MCF 10A (cell line): ENCODE measurements at regions of chr14 and their contacts with region 1.

Region 1: GRCh38 chr14:33792720-33793368 is 158.0 kb downstream of the EGLN3 start:
- DNase-seq: peak; percentile 64
- H3K4me3 Mint-ChIP-seq: peak overlapping the region; percentile 17
- H3K27ac Mint-ChIP-seq: no peak overlapping the region
- H3K4me1 Mint-ChIP-seq: no peaks in the 10 kb centered on the region
- H3K27me3 Mint-ChIP-seq: no peaks in the 10 kb centered on the region
- CTCF ChIP-seq: peak; percentile 93

Region 2: GRCh38 chr14:32576088-32576795 is 1216.6 kb before region 1 on chr14:
- CTCF ChIA-PET with region 1: interaction called, 8 read pairs
- POLR2A ChIA-PET with region 1: no interaction called
- intact Hi-C with region 1: loop called (anchors 1 kb)
- DNase-seq: peak; percentile 73
- H3K4me3 Mint-ChIP-seq: no peak overlapping the region
- H3K27ac Mint-ChIP-seq: no peak overlapping the region
- H3K4me1 Mint-ChIP-seq: no peaks in the 10 kb centered on the region
- H3K27me3 Mint-ChIP-seq: peaks cover 13% of the 10 kb centered on the region
- CTCF ChIP-seq: peak; percentile 97

Region 3: DNA sequence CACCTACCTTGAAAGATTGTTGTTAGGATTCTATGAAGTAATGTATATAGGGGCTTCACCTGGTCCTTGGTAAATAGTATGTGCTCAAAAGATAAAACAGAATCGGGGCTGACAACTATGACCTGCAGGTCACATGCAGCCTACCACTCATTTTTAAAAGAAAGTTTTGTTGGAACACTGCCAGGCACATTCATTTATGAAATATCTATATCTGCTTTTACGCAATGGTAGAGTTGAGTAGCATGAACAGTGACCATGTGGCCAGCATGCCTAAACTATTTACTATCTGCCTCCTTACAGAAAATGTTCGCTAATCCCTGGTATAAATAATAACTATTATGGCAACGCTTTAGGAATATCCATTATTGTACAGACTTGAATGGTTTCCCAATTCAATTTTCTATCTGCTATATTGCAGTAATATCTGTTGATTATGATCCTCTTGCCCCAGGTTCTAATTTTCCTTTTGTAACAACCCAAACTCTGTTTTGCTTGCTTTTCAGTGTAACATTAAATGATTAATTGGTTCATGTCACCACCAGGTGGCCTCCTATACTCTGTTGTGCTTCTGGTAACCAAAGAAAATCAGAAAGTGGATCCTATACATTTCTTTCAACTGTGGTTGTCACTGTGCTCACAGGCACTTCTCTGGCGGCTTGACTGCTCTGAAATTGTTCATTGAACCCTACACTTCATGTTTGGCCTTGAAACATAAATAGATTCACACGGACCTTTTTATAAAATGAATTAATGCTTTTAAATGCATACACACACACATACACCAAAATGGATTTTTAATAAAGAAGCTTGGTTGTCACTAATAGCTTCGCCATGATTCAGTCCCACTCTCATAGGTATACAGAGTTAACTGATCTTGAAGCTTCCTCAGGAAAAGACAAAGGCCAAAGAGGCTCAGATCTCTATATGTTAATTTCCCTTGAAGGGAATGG is 1081.8 kb before region 1 on chr14:
- CTCF ChIA-PET with region 1: interaction called, 5 read pairs
- POLR2A ChIA-PET with region 1: no interaction called
- intact Hi-C with region 1: loop called (anchors 1 kb)
- DNase-seq: peak; percentile 56
- H3K4me3 Mint-ChIP-seq: no peak overlapping the region
- H3K27ac Mint-ChIP-seq: no peak overlapping the region
- H3K4me1 Mint-ChIP-seq: peaks cover 6% of the 10 kb centered on the region
- H3K27me3 Mint-ChIP-seq: no peaks in the 10 kb centered on the region
- CTCF ChIP-seq: peak; percentile 56

Region 4: DNA sequence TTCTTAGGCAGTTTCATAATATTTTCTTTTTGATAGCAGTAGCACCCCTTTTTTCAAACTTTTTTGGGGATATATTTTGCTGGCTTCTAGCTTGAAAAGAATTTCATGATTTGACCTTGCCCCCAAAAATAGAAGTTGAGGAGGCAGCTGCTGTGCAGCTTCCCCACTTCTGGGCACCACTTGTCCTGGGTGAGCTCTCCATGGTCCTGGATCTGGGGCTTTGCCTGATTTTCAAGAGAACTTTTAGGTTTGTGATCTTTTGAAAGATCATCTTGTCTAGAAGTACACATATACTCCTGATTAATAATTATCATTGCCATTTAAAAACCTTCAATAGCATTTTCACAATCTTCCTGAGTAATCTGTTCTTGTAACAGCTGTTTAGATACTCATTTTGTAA is 582.5 kb before region 1 on chr14:
- CTCF ChIA-PET with region 1: interaction called, 3 read pairs
- POLR2A ChIA-PET with region 1: no interaction called
- intact Hi-C with region 1: loop called (anchors 10 kb)
- DNase-seq: peak; percentile 38
- H3K4me3 Mint-ChIP-seq: no peak overlapping the region
- H3K27ac Mint-ChIP-seq: no peak overlapping the region
- H3K4me1 Mint-ChIP-seq: no peaks in the 10 kb centered on the region
- H3K27me3 Mint-ChIP-seq: peaks cover 29% of the 10 kb centered on the region
- CTCF ChIP-seq: no peak

Region 5: DNA sequence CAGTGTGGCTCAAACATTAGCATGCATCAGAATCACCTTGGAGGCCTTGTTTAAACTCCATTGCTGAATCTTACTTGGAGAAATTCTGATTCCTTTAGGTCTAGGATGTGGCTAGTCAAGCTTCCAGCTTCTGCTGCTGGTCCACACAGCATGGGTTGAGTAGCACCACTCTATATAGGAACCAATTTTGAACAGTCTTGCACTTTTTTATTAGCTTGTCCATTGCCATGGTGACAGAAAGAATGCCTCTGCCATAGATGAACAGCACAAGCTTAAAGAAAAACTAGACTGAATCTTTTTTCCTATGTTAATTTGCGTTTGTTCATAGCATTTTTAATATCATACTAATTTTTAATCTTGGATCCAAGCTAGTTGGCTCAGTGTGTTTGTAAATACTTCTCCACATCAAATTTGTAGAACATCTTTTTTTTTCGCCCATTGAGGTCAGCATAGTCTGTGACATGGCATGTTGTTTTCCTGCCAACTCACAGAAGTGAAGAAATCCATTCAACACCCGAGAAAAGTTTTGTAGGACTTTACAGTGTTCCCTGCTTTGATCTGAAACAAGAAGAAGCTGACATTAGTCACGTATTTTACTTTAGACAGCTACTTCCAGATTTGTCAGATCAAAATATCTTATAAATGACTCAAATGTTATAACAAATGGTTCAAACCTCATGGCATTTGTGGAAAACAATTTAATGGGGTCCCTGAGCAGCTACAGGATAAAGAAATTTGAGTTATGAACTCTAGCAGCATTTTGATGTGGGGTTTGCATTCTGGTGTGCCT is 280.8 kb before region 1 on chr14:
- CTCF ChIA-PET with region 1: interaction called, 6 read pairs
- POLR2A ChIA-PET with region 1: no interaction called
- intact Hi-C with region 1: loop called (anchors 1 kb)
- DNase-seq: peak; percentile 64
- H3K4me3 Mint-ChIP-seq: no peak overlapping the region
- H3K27ac Mint-ChIP-seq: no peak overlapping the region
- H3K4me1 Mint-ChIP-seq: peaks cover 8% of the 10 kb centered on the region
- H3K27me3 Mint-ChIP-seq: no peaks in the 10 kb centered on the region
- CTCF ChIP-seq: no peak

Region 6: DNA sequence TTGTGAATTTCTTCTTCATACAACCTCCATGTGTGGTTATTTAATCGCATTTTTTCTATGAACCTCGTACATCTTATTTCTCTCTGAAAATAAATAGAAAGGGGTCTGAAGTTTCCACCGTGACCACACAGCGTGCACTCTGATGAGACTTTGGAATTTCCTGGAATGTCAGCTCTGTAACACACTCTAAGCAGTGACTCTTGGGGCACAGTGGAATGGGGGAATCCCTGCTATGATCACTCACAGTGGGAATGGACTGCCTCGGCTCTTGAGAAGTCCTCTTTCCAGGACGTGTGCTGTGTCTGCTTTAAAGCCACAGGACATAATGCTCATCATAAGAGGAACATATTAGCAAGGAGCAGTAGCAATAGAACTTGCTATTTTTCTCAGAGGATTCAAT is 258.2 kb before region 1 on chr14:
- CTCF ChIA-PET with region 1: no interaction called
- POLR2A ChIA-PET with region 1: no interaction called
- intact Hi-C with region 1: no loop called
- DNase-seq: no peak
- H3K4me3 Mint-ChIP-seq: no peak overlapping the region
- H3K27ac Mint-ChIP-seq: no peak overlapping the region
- H3K4me1 Mint-ChIP-seq: no peaks in the 10 kb centered on the region
- H3K27me3 Mint-ChIP-seq: no peaks in the 10 kb centered on the region
- CTCF ChIP-seq: no peak

Region 7: DNA sequence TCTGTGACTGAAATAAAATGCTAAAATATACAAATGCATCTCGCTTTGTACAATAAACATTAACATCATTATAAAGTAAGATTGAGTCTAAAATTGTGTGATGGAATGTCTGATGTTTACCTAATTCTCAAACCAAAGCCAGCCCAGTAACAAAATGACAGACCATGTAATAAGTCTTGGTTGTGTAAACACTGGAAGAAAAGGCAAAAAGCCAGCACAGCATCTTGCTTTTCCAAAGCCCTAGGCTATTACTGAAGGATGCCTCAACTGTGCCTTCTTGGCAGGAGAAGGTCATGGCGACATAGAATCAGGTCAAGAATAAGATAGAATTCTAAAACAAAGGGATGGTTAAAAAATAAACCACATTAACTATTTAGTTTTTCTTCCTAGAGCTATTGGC is 11.6 kb before region 1 on chr14:
- CTCF ChIA-PET with region 1: interaction called, 14 read pairs
- POLR2A ChIA-PET with region 1: no interaction called
- intact Hi-C with region 1: no loop called
- DNase-seq: peak; percentile 33
- H3K4me3 Mint-ChIP-seq: no peak overlapping the region
- H3K27ac Mint-ChIP-seq: no peak overlapping the region
- H3K4me1 Mint-ChIP-seq: peaks cover 18% of the 10 kb centered on the region
- H3K27me3 Mint-ChIP-seq: no peaks in the 10 kb centered on the region
- CTCF ChIP-seq: no peak

Region 8: GRCh38 chr14:34227834-34228649 is 435.2 kb after region 1 on chr14:
- CTCF ChIA-PET with region 1: interaction called, 12 read pairs
- POLR2A ChIA-PET with region 1: no interaction called
- intact Hi-C with region 1: no loop called
- DNase-seq: peak; percentile 70
- H3K4me3 Mint-ChIP-seq: peak overlapping the region; percentile 46
- H3K27ac Mint-ChIP-seq: peak overlapping the region; percentile 50
- H3K4me1 Mint-ChIP-seq: peaks cover 31% of the 10 kb centered on the region
- H3K27me3 Mint-ChIP-seq: no peaks in the 10 kb centered on the region
- CTCF ChIP-seq: peak; percentile 76